ENCODE measurements at regions of chrX and their contacts with region 1.

Region 1: DNA sequence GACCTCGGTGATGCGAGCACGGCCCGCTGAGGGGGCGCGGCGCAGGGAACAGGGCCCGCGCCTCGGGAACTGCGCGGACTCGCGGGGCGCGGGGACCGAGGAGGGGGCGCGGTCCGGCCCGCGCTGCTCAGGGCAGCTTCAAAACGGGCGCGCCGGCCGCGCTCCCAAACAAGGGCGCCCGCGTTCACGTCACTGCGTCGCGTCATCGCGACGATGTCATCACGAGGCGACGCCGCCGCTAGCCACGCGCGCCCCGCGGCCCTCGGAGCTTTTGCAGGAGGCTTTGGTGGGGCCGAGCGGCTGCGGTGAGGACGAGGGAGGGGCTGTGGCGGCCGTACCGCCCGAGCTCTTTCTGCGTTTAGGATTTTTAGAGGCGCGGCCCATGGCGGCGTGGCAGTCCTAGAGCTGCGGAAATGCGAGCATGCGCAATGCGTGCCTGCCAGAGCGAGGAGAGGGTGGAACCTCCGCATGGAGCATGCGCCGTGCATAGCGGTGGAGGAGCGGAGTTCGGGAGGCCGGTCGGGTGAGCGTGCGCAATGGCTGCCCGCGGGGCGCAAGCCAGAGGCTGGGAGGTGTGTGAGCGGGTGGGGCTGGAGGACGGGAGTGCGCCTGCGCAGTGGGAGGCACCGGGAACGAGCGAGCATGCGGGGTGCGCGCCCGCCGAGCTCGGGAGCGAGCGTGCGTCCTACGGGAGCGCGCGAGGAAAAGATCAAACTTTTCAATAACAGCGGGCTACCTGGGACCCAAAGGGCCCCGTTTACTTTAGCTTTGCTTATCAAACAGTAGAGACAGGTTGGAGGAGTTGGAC is at the start of gene PPP2R3B:
- DNase-seq: peak; percentile 99 to 100 (median 100)
- ATAC-seq: peak; percentile 100
- H3K4me3 ChIP-seq: peak within 1 kb of the TSS; percentile 32
- H3K27ac ChIP-seq: peak within 1 kb of the TSS; percentile 77
- H3K4me1 ChIP-seq: peaks cover 2% of the 10 kb centered on the region
- H3K27me3 ChIP-seq: no peaks in the 10 kb centered on the region
- total RNA-seq, gene PPP2R3B: 101 to 163 (median 147) TPM

Region 2: DNA sequence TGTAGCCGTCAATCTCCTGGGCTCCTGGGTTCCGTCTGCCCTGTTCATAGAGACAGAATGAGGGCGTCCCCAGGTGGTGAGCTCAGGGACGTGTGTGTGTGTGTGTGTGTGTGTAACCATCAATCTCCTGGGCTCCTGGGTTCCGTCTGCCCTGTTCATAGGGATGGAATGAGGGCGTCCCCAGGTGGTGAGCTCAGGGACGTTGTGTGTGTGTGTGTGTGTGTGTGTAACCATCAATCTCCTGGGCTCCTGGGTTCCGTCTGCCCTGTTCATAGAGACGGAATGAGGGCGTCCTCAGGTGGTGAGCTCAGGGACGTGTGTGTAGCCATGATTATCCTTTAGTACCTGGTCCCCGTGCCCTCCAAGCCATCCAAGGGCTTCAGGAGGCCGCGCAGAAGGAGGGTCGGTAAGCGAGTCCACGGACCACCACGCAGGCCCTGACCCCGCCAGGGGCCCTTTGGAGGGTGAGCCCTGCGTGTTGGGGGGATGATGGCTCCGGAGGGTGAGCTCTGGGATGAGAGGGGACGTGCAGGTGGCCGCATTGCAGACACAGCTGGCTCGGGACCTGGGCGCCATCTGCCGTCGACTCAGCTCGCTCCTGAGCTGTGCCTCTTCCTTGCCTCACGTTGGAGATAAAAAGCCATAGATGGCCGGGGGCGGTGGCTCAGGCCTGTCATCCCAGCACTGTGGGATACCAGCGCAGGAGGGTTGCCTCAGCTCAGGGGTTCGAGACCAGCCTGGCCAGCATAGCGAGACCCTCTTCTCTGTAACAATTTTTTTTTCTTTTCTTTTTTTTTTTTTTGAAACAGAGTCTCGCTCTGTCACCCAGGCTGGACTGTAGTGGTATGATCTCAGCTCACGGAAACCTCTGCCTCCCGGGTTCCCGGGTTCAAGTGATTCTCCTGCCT is 63.0 kb before region 1 on chrX:
- intact Hi-C with region 1: loop called in 1 of 4 experiments (anchors 10 kb)
- DNase-seq: peak; percentile 44 to 77 (median 75)
- ATAC-seq: peak; percentile 1 to 19
- H3K4me3 ChIP-seq: no peak overlapping the region
- H3K27ac ChIP-seq: no peak overlapping the region
- H3K4me1 ChIP-seq: peaks cover 3% of the 10 kb centered on the region
- H3K27me3 ChIP-seq: no peaks in the 10 kb centered on the region

Region 3: GRCh38 chrX:936979-937769 is 550.2 kb after region 1 on chrX:
- intact Hi-C with region 1: no loop called
- DNase-seq: no peak
- ATAC-seq: no peak
- H3K4me3 ChIP-seq: no peak overlapping the region
- H3K27ac ChIP-seq: no peak overlapping the region
- H3K4me1 ChIP-seq: no peaks in the 10 kb centered on the region
- H3K27me3 ChIP-seq: no peaks in the 10 kb centered on the region